HCT116 (cell line): ENCODE measurements at regions of chr14 and their contacts with region 1.

Region 1: DNA sequence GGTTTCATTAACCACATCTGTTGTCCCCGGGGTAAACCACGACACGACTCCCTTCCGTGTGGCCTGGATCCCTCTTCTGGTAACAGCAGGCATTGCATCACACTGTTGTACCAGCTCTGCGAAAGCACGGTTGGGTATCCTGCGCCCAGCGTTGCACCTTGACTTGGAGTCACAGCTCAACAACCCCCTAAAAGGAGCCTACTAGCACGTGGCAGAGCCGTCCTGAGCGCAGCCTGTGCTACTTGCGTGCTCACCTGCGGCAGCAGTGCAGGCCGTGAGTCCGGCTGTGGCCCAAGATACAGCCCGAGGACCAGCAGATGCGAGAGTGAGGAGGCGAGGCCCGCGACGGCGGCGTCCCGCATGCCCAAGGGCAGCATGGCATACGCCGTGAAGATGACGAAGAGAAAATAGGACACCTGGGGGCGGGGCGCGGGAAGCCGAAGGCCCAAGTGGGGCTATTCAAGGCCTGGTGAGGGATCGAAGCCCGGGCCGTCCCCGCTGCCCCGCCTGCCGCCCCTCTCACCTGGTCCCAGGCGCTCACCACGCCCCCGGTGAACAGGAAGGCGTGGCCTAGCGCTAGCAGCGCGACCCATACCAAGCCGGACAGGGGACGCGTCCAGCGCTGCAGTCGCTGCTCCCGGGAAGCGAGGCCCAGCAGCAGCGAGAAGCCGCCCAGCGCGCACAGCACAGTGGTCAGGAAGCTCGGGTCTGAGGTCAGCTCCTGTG is 2.4 kb downstream of the ADCY4 start:
- DNase-seq: no peak
- ATAC-seq: peak; percentile 58
- H3K4me3 ChIP-seq: no peak overlapping the region
- H3K27ac ChIP-seq: no peak overlapping the region
- H3K4me1 ChIP-seq: peaks cover 4 to 12% of the 10 kb centered on the region in 2 experiments
- H3K27me3 ChIP-seq: no peaks in the 10 kb centered on the region
- CTCF ChIP-seq: peak; percentile 23 to 67 (median 61); a peak in 4 of 6 replicates
- POLR2A ChIP-seq: no peak
- RAD21 ChIP-seq: peak; percentile 46; the same call in 1 of the 2 replicates

Region 2: DNA sequence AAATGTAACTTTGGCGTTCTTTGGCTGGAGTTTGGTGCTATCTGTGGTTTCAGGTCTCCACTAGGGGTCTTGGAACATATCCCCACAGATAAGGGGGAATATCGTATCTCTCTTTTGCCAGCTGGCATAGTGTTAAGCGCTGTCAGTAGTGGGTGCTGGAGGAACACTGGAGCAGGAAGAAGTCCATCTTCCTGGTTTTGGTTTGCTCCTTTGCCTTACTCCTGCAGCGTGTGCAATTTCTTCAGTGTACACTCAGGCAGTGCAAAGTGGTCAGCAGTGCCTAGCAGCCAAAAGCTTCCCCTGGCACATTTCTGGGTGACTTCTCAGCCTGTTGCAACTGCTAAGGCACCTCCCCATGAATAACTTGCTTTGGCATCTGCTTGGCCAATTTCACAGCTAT is 19.1 kb after region 1 on chr14:
- CTCF ChIA-PET with region 1: interaction called, 17 read pairs
- POLR2A ChIA-PET with region 1: no interaction called
- RAD21 ChIA-PET with region 1: no interaction called
- intact Hi-C with region 1: no loop called
- DNase-seq: no peak
- ATAC-seq: peak; percentile 70
- H3K4me3 ChIP-seq: no peak overlapping the region
- H3K27ac ChIP-seq: no peak overlapping the region
- H3K4me1 ChIP-seq: peaks cover 5 to 22% of the 10 kb centered on the region in 2 experiments; a peak in 3 of 4 replicates
- H3K27me3 ChIP-seq: no peaks in the 10 kb centered on the region
- CTCF ChIP-seq: 0 out of 6 replicates have a peak, but pooled peaks of 2 of the 3 experiments have one; percentile 12 to 14
- POLR2A ChIP-seq: no peak
- RAD21 ChIP-seq: peak; percentile 30; the same call in 1 of the 2 replicates

Region 3: GRCh38 chr14:24366721-24367513 is 34.5 kb after region 1 on chr14:
- CTCF ChIA-PET with region 1: interaction called, 25 read pairs
- POLR2A ChIA-PET with region 1: no interaction called
- RAD21 ChIA-PET with region 1: interaction called, 3 to 4 read pairs
- intact Hi-C with region 1: loop called (anchors 1 kb)
- DNase-seq: peak; percentile 97
- ATAC-seq: peak; percentile 77
- H3K4me3 ChIP-seq: peak overlapping the region; percentile 55 to 64
- H3K27ac ChIP-seq: peak overlapping the region; percentile 89
- H3K4me1 ChIP-seq: peaks cover 15 to 33% of the 10 kb centered on the region in 2 experiments
- H3K27me3 ChIP-seq: no peaks in the 10 kb centered on the region
- CTCF ChIP-seq: no peak
- POLR2A ChIP-seq: no peak
- RAD21 ChIP-seq: no peak

Region 4: GRCh38 chr14:24411443-24412389 is 79.3 kb after region 1 on chr14:
- CTCF ChIA-PET with region 1: interaction called, 11 read pairs
- POLR2A ChIA-PET with region 1: no interaction called
- RAD21 ChIA-PET with region 1: no interaction called
- intact Hi-C with region 1: no loop called
- DNase-seq: peak; percentile 51
- ATAC-seq: peak; percentile 92
- H3K4me3 ChIP-seq: no peak overlapping the region
- H3K27ac ChIP-seq: no peak overlapping the region
- H3K4me1 ChIP-seq: no peaks in the 10 kb centered on the region
- H3K27me3 ChIP-seq: no peaks in the 10 kb centered on the region
- CTCF ChIP-seq: peak; percentile 79 to 84 (median 81)
- POLR2A ChIP-seq: no peak
- RAD21 ChIP-seq: peak; percentile 61

Region 5: DNA sequence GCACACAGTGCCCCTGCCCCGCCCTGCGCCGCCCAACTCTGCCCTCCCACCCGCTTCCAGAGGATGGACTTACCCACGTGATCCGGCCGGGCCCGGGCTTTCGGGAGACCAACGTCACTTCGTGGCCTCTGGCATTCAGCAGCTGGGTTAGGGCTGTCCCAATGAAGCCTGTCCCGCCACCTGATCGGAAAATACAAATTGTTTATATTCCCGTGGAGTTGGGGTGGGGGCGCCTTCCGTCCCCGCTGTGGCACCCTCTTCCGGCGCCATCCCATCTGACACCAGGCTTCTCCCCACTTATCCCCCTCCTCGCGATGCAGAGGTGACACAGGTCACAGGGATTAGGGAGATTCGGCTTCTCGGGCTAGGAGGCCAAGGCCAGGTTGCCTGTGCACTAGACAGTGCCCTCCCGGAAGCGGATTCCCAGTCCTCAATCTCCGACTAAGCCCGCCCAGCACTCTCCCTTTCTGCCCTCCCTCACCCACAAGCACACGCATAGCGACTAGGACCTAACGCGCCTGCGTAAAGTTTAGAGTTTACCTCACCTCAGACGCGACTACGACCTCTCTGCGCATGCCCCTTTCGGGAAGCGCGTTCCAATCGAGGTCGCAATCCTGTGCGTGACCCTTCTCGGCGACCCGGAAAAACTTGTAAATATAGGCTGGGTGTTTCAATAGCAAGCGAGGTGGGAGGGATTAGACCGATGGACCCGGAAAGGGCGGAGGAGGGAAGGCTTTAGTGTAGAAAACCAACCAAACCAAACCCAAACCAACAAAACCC is 110.0 kb after region 1 on chr14 and contains the start of gene SDR39U1:
- CTCF ChIA-PET with region 1: interaction called, 82 read pairs
- POLR2A ChIA-PET with region 1: interaction called, 5 read pairs
- RAD21 ChIA-PET with region 1: no interaction called
- intact Hi-C with region 1: no loop called
- DNase-seq: peak; percentile 97
- ATAC-seq: peak; percentile 88
- H3K4me3 ChIP-seq: peak within 1 kb of the TSS; percentile 76 to 94
- H3K27ac ChIP-seq: peak within 1 kb of the TSS; percentile 96
- H3K4me1 ChIP-seq: peaks cover 5 to 17% of the 10 kb centered on the region in 2 experiments; a peak in 3 of 4 replicates
- H3K27me3 ChIP-seq: no peaks in the 10 kb centered on the region
- CTCF ChIP-seq: no peak
- POLR2A ChIP-seq: peak; percentile 88
- RAD21 ChIP-seq: no peak
- total RNA-seq, gene SDR39U1: 61.8 TPM

Region 6: DNA sequence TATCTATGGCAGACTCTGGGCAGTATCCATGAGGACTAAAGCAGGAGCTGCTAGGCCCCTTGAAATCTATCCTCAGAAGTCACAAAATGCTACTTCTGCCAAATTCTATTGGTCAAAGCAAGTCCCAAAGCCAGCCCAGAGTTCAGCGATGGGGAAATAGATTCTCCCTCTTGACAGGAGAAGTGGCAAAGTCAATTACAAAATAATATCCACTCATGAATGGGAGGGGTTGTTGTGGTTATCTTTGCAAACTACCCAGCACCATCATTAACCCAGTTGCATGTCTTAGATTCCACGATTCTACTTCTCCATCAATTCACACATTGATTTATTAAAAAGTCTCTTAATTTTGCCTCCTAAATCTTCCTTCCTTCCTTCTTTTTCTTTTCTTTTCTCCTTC is 748.3 kb after region 1 on chr14:
- CTCF ChIA-PET with region 1: no interaction called
- POLR2A ChIA-PET with region 1: no interaction called
- RAD21 ChIA-PET with region 1: no interaction called
- intact Hi-C with region 1: no loop called
- DNase-seq: no peak
- ATAC-seq: no peak
- H3K4me3 ChIP-seq: no peak overlapping the region
- H3K27ac ChIP-seq: no peak overlapping the region
- H3K4me1 ChIP-seq: no peaks in the 10 kb centered on the region
- H3K27me3 ChIP-seq: no peaks in the 10 kb centered on the region
- CTCF ChIP-seq: no peak
- POLR2A ChIP-seq: no peak
- RAD21 ChIP-seq: no peak